CD8-positive, alpha-beta T cell (primary cell): ENCODE measurements at regions of chr5 and their contacts with region 1.

Region 1: GRCh38 chr5:80703747-80704146 is 49.0 kb upstream of the DHFR start:
- DNase-seq: no peak
- ATAC-seq: no peak
- H3K4me3 ChIP-seq: no peak overlapping the region
- H3K4me3 Mint-ChIP-seq: no peak overlapping the region
- H3K27ac ChIP-seq: no peak overlapping the region
- H3K27ac Mint-ChIP-seq: no peak overlapping the region
- H3K4me1 ChIP-seq: peaks cover 13% of the 10 kb centered on the region
- H3K4me1 Mint-ChIP-seq: peaks cover 24% of the 10 kb centered on the region
- H3K27me3 ChIP-seq: no peaks in the 10 kb centered on the region
- H3K27me3 Mint-ChIP-seq: no peaks in the 10 kb centered on the region
- CTCF ChIP-seq: no peak

Region 2: DNA sequence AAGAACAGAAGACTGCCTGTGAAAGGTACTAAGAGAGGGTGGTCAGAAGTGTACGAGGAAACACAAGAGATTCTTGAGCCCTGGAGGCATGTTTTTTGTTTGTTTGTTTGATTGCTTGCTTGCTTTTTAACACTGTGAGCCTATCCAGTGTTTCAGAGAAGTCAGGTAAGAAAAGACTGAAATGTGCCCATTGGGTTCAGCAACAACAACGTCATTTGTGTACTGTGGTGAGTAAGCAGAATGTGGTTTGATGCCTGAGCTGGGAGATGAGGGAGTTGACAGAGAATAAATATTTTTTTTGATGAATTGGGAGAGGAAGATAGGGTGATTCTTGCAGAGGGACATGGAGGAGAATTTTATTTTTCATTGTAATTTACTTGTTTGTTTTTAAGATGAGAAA is 1501.3 kb after region 1 on chr5:
- CTCF ChIA-PET with region 1: no interaction called
- POLR2A ChIA-PET with region 1: no interaction called
- intact Hi-C with region 1: loop called in 1 of 2 experiments (anchors 5 kb)
- DNase-seq: no peak
- ATAC-seq: no peak
- H3K4me3 ChIP-seq: no peak overlapping the region
- H3K4me3 Mint-ChIP-seq: no peak overlapping the region
- H3K27ac ChIP-seq: no peak overlapping the region
- H3K27ac Mint-ChIP-seq: no peak overlapping the region
- H3K4me1 ChIP-seq: no peaks in the 10 kb centered on the region
- H3K4me1 Mint-ChIP-seq: no peaks in the 10 kb centered on the region
- H3K27me3 ChIP-seq: no peaks in the 10 kb centered on the region
- H3K27me3 Mint-ChIP-seq: no peaks in the 10 kb centered on the region
- CTCF ChIP-seq: no peak